Left cardiac atrium (tissue), 4 donors: ENCODE measurements at regions of chr12 and their contacts with region 1.

Region 1: GRCh38 chr12:3073438-3074250 is 3.5 kb upstream of the TSPAN9 start:
- DNase-seq: peak; percentile 83
- ATAC-seq: peak; percentile 16 to 26

Region 2: GRCh38 chr12:3034067-3034750 is 39.4 kb before region 1 on chr12:
- intact Hi-C with region 1: no loop called
- DNase-seq: peak; percentile 78
- ATAC-seq: peak; percentile 80 to 86

Region 3: DNA sequence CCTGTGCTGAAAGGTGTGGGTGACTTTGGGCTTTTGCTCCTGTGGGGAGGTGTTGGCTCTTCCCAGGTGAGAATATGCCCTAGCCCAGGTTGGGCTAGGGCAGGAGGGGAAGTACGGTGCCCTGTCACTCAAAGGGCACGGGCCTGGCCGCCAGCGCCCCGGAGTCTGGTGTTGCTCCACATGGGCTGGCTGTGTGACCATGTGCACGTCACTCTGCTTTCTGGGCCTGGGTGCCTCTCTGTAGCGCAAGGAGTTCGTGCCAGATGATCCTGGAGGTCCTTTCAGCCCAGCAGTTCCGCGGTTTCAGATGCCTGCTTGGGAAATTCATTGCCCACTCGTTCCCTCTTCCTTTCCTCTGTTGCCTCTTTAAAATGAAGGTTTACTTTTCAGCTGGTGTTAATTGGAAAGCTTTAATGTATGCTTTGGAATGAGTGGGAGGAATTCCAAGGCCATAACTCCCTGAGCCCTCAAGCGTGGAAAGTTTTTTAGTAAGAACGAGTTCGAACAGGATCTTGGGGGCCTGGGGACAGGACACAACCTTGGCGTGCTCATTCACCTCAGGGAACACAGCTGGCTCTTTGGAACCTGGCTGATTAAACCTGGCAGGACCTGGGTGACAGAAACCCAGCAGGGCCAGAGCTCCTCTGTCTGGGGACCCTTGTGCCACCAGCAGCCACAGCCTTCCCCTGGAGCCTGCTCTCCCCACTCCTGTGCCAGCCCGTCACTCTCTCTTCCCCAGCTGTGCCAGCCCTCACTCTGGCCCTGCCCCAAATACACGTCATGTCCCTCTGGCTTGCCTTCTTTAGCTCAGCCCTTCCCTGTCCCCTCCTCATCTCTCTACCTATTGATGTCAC is 46.3 kb after region 1 on chr12:
- intact Hi-C with region 1: loop called in 1 of 2 experiments (anchors 5 kb)
- DNase-seq: peak; percentile 75
- ATAC-seq: peak; percentile 74 to 82

Region 4: DNA sequence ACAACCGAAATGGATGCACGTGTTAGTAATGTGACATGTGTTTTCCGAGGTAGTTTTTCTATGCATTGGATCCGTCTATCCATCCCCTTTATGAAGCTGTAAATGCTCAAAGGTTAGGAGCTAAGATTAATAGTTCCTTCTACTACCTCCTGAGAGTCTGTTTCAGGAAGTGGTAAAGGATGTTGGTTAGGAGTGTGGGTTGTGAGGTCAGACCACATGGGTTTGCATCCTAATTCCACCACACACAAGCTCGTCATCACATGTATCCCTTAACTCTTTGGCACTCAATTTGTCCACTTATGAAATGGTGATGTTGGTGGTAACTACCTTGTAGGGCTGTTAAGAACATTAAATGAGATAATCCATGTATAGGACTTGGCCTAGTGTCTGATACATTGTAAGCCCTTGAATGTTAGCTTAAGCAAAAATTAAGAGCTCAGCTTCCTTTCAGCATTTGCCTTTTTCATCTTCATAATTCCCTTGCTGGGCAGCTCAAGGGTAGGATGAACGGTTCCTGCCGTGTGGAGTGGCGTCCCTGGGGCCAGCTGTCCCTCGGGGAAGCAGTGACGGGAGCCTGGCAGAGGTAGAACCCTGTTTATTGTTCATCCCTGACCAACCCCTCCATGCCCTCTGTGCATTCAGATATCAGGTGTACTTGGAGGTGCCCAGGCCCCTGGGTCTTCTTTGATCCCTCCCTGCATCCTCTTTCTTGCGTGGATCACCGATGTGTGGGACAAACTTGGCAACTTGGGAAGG is 55.8 kb after region 1 on chr12:
- intact Hi-C with region 1: loop called (anchors 5 to 10 kb)
- DNase-seq: no peak
- ATAC-seq: no peak

Region 5: DNA sequence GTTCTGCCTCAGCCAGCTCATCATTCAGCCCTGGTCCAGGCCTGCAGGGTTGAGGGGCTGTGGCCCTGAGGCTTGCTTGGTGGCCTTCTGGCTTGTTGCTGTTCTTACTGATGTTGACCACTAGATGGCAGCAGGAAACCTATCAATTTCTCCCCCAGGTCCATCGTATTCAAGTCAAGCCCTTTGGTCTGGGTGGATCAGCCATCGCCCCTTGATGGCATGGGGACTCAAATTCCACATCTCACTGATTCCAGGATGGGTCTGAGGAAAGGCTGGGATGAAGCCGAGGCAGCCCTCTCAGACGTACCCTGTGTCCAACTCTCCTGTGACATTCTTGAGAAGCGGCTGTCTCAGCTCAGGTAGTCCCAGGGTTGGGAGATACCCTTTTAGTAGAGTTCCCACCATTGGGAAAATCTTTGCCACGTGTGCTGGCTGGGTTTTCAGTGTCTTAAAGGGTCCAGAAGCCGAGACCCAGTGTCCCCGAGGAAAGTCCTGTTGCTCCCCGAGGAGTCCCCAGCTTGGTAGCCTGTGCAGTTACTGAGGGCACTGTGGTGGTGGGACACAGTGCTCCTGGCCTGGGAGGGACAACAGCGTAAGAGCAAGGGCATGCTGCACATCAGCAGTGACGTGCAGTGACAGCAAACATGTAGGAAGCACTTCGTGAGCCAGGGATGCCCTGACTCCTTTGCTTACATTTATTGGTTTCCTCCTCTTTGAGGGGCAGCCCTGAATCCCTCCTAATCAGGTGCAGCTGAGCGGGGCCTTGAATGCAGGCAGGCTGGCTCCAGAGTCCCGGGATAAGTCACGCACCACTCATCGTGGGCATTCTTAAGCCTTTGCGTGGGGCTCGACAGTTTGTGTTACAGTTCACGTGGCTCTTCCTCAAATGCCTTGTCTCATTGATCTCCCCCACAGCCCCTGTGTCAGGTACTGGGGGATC is 62.1 kb after region 1 on chr12:
- intact Hi-C with region 1: loop called (anchors 5 to 10 kb)
- DNase-seq: no peak
- ATAC-seq: peak; percentile 28 to 32

Region 6: DNA sequence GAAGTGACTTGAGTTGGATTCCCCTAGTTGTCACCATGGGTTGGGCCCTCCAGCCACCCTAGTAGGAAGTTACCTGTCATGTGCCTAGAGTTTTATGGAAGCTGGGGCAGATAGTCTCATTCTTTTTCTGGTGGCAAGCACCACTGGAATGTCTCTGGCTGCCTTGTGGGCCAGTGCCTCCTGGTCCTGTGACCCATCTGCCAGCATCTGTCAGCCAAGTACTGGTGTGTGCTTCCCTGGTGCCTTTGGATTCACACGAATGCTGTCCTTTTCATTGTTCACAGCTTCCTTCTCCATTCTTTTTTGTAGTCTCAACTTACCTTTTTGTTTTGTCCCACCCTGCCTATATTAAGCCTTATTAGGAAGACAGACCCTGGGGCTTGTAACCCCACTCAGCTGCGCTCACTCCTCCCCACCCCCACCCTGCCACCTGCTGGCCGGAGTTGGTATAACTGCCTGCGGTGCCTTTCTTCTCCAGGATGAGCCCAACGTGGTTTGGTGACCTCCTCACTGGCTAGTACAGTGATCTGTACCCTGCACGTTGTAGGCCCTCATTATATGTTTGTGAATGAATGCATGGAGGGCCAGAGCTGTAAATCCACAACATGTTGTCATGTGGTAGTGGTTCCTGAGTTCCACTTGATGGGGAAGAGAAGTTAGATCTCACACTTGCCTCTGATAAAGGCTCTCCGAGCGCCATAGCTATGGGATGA is 129.2 kb after region 1 on chr12:
- intact Hi-C with region 1: loop called (anchors 5 to 10 kb)
- DNase-seq: no peak
- ATAC-seq: peak in 1 of 2 donors; percentile 14

Region 7: GRCh38 chr12:3216726-3217682 is 143.4 kb after region 1 on chr12:
- intact Hi-C with region 1: no loop called
- DNase-seq: peak; percentile 70
- ATAC-seq: peak; percentile 36 to 63

Region 8: GRCh38 chr12:3275171-3276041 is 201.8 kb after region 1 on chr12:
- intact Hi-C with region 1: loop called (anchors 2 to 5 kb)
- DNase-seq: peak; percentile 78
- ATAC-seq: peak; percentile 61 to 68